PC-9 (cell line): ENCODE measurements at regions of chr15 and their contacts with region 1.

Region 1: GRCh38 chr15:62886431-62887071 is 156.0 kb upstream of the TPM1 start:
- DNase-seq: no peak
- H3K4me3 ChIP-seq: no peak overlapping the region
- H3K27ac ChIP-seq: no peak overlapping the region
- H3K4me1 ChIP-seq: peaks cover 9% of the 10 kb centered on the region; the same call in 1 of the 2 replicates
- H3K27me3 ChIP-seq: no peaks in the 10 kb centered on the region
- CTCF ChIP-seq: no peak

Region 2: DNA sequence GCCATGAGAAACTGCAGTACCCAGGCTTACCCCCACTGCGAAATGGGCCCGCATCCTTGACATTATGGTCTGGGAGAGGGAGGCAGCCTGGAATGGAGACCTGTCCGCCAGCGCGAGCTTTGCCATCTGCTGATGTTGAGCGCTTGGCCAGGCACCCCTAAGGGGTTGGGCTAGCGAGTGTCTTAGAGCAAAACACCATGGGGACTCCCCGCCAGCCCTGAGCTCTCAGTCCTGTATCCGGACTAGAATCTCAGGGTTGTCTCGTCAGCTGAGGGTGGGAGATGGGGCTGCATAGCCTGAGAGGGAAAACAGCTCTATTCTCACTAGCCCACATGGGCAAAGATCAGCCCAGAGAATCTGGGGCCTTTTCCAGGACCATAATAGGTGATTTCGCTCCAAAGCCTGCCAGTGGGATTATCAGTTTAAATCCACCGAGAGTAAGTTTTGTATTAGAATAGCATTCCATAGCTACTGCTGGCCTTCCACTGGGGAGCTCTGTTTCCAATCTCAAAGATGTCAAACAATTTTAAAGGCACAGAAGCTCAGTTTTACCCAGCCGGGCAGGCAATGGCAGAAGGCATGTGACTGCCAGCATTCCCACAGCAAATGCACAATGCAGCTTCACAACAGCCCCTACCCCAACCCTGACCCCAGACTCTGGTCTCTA is 11.5 kb before region 1 on chr15:
- CTCF ChIA-PET with region 1: no interaction called
- POLR2A ChIA-PET with region 1: interaction called, 10 read pairs
- intact Hi-C with region 1: no loop called
- DNase-seq: no peak
- H3K4me3 ChIP-seq: no peak overlapping the region
- H3K27ac ChIP-seq: no peak overlapping the region
- H3K4me1 ChIP-seq: no peaks in the 10 kb centered on the region
- H3K27me3 ChIP-seq: no peaks in the 10 kb centered on the region
- CTCF ChIP-seq: no peak